Activated CD4-positive, alpha-beta memory T cell treated with anti-CD3 and anti-CD28 coated beads for 36 hours (primary cell): ENCODE measurements at regions of chr1 and their contacts with region 1.

Region 1: GRCh38 chr1:9784508-9785133 is 39.1 kb downstream of the CLSTN1 start:
- DNase-seq: peak; percentile 76
- H3K4me3 Mint-ChIP-seq: no peak overlapping the region
- H3K27ac Mint-ChIP-seq: no peak overlapping the region
- H3K4me1 Mint-ChIP-seq: peaks cover 28% of the 10 kb centered on the region
- H3K27me3 Mint-ChIP-seq: no peaks in the 10 kb centered on the region

Region 2: DNA sequence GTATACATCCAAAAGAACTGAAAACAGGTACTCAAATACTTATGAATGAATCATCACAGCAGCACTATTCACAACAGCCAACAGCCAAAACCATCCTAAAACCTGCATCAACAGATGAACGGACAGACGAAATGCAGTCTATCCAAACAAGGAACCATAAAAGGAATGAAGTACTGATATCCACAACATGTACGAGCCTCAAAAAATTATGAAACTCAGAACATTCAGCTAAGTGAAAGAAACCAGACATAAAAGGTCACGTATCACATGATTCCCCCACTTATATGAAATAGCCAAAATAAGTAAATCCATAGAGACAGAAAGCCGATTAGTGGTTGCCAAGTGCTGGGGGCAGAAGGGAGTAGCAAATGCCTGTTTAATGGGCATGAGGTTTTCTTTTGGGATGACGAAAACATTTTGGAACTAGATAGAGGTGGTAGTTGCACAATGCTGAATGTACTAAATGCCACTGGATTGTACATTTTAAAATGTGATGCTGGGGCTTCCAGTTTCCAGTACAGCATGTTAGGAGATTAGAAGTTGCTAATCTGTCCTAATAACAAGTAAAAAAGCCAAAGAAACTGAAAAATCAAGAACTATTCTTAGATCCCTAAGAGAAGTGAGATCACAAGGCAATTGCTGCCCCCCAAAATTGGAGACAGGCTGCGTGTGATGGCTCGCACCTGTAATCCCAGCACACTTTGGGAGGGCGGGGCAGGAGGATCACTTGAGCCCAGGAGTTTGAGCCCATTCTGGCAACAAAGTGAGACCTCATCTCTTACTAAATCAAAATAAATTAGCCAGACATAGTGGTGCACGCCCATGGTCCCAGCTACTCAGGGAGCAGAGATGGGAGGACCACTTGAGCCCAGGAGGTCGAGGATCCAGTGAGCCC is 13.9 kb after region 1 on chr1:
- CTCF ChIA-PET with region 1: interaction called, 47 read pairs
- POLR2A ChIA-PET with region 1: interaction called, 3 read pairs
- intact Hi-C with region 1: loop called (anchors 1 kb)
- DNase-seq: no peak
- H3K4me3 Mint-ChIP-seq: no peak overlapping the region
- H3K27ac Mint-ChIP-seq: no peak overlapping the region
- H3K4me1 Mint-ChIP-seq: peaks cover 49% of the 10 kb centered on the region
- H3K27me3 Mint-ChIP-seq: no peaks in the 10 kb centered on the region

Region 3: DNA sequence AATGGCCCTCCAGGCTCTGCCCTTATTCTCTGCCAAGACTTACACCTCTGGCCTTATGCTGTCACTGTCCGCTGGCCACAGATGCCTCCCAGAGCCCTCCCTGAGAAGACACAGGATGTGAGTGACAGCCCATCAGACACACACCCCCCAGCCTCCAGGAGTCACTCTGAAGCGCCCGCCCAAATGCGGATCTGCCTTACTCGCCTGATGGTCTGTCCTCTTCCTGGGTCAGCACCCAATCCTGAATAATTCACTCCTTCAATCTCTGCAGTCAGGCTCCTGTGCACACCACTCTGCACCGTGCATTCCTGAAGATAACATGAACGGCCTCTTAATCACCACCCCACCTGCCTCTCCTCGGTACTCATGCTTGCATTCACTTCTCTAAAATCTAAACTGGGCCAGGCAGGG is 24.5 kb after region 1 on chr1:
- CTCF ChIA-PET with region 1: interaction called, 47 read pairs
- POLR2A ChIA-PET with region 1: no interaction called
- intact Hi-C with region 1: no loop called
- DNase-seq: no peak
- H3K4me3 Mint-ChIP-seq: no peak overlapping the region
- H3K27ac Mint-ChIP-seq: no peak overlapping the region
- H3K4me1 Mint-ChIP-seq: peaks cover 30% of the 10 kb centered on the region
- H3K27me3 Mint-ChIP-seq: no peaks in the 10 kb centered on the region

Region 4: DNA sequence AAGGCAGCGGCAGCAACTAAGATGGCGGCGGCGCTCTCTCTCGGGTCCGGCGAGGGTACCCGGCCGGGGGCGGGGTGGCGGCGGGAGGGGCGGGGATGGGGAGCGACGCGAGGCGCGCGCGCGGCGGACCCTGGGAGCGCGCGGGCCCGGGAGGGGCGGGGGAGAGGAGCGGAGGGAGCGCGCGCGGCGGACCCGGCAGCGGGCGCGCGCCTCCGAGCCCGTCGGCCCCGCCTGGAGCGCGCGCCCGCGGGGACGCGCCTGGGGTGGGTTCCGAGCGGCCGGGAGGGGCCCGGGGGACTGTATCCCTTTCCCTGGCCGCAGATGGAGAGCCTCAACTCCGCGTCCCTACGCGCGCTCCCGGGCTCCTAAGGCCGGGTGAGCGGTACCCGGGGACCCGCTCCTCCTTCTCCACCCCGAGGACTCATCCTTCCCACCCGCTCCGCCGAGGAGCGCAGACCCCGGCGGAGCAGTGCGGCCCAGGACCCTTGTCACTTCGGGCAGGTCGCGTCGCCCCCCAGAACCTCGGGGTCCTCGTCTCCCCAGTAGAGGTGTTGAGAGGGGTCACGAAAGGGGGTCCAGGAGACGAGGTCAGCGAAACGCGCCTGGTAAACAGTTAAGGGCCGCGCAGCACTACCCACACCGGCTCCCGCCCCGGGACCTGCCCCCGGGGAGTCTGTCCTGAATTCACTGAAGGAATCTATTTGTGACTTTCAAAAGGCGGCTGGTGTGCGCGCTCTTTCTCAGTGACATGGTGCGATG is 39.5 kb after region 1 on chr1 and contains the start of gene CLSTN1:
- CTCF ChIA-PET with region 1: interaction called, 15 read pairs
- POLR2A ChIA-PET with region 1: no interaction called
- intact Hi-C with region 1: loop called (anchors 1 kb)
- DNase-seq: peak; percentile 93
- H3K4me3 Mint-ChIP-seq: peak within 1 kb of the TSS; percentile 94
- H3K27ac Mint-ChIP-seq: peak within 1 kb of the TSS; percentile 77
- H3K4me1 Mint-ChIP-seq: peaks cover 46% of the 10 kb centered on the region
- H3K27me3 Mint-ChIP-seq: no peaks in the 10 kb centered on the region
- total RNA-seq, gene CLSTN1: 33.6 to 34.1 TPM

Region 5: GRCh38 chr1:9861360-9861759 is 76.7 kb after region 1 on chr1:
- CTCF ChIA-PET with region 1: interaction called, 238 read pairs
- POLR2A ChIA-PET with region 1: no interaction called
- intact Hi-C with region 1: loop called (anchors 2 kb)
- DNase-seq: no peak
- H3K4me3 Mint-ChIP-seq: no peak overlapping the region
- H3K27ac Mint-ChIP-seq: no peak overlapping the region
- H3K4me1 Mint-ChIP-seq: peaks cover 8% of the 10 kb centered on the region
- H3K27me3 Mint-ChIP-seq: no peaks in the 10 kb centered on the region

Region 6: GRCh38 chr1:9867408-9868243 is 83.0 kb after region 1 on chr1:
- CTCF ChIA-PET with region 1: interaction called, 238 read pairs
- POLR2A ChIA-PET with region 1: no interaction called
- intact Hi-C with region 1: loop called (anchors 1 kb)
- DNase-seq: peak; percentile 92
- H3K4me3 Mint-ChIP-seq: no peak overlapping the region
- H3K27ac Mint-ChIP-seq: no peak overlapping the region
- H3K4me1 Mint-ChIP-seq: no peaks in the 10 kb centered on the region
- H3K27me3 Mint-ChIP-seq: no peaks in the 10 kb centered on the region